Heart right ventricle (tissue), 16 donors: ENCODE measurements at regions of chr6 and their contacts with region 1.

Region 1: GRCh38 chr6:28940858-28941680 is 17.3 kb upstream of the TRIM27 start:
- DNase-seq: peak; percentile 42 to 87
- ATAC-seq: peak; percentile 72 to 95 (median 83)
- H3K4me3 ChIP-seq: peak overlapping the region; percentile 41 to 71 (median 61)
- H3K27ac ChIP-seq: peak overlapping the region in 9 of 10 donors; percentile 35 to 82 (median 67)
- H3K4me1 ChIP-seq: peaks cover 0 to 56% (median 26%) of the 10 kb centered on the region in 9 donors
- H3K27me3 ChIP-seq: no peaks in the 10 kb centered on the region
- CTCF ChIP-seq: no peak

Region 2: DNA sequence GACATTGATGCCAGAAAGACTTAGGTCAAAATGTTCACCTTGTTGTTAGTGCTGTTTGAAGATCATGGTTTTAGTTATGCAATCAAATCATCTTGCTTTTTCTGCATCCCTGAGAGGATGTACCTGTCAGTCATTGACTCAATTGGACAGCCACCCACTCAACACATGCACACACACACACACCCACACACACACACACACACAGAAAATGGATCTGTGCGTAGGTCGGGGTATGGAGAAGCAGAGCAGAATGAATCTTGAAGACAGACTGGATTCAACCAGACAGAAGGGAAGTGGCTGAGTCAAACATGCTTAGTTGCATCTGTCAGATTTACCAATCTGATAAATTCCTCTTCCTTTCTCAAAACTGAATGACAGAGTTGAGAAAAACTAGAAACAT is 478.7 kb before region 1 on chr6:
- intact Hi-C with region 1: no loop called
- DNase-seq: no peak
- ATAC-seq: no peak
- H3K4me3 ChIP-seq: no peak overlapping the region
- H3K27ac ChIP-seq: no peak overlapping the region
- H3K4me1 ChIP-seq: no peaks in the 10 kb centered on the region
- H3K27me3 ChIP-seq: peaks cover 0 to 94% (median 70%) of the 10 kb centered on the region in 7 donors
- CTCF ChIP-seq: no peak

Region 3: DNA sequence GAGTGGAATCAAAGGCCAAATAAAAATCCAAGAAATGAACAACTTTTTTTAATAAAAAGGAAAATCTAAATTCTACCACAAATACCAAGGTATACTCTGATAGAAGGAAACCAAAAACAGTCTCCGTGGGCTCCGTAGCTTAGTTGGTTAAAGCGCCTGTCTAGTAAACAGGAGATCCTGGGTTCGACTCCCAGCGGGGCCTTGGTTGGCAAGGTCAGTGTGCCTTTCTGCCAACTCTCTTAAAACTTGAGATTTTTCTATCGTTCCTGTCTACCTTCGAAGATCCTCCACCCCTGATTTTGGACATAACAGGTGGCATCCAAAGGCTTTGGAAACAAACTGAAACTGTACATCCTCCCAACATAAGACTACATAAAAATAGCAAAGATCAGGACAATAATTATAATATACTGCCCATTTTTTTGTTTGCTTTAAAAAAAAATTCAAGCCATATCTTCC is 215.2 kb before region 1 on chr6:
- intact Hi-C with region 1: no loop called
- DNase-seq: no peak
- ATAC-seq: no peak
- H3K4me3 ChIP-seq: no peak overlapping the region
- H3K27ac ChIP-seq: no peak overlapping the region
- H3K4me1 ChIP-seq: peaks cover 0 to 14% (median 0%) of the 10 kb centered on the region in 9 donors
- H3K27me3 ChIP-seq: peaks cover 0 to 96% (median 76%) of the 10 kb centered on the region in 7 donors
- CTCF ChIP-seq: no peak

Region 4: GRCh38 chr6:28856620-28857005 is 84.5 kb before region 1 on chr6:
- intact Hi-C with region 1: loop called in 1 of 10 experiments (anchors 10 kb)
- DNase-seq: no peak
- ATAC-seq: no peak
- H3K4me3 ChIP-seq: no peak overlapping the region
- H3K27ac ChIP-seq: no peak overlapping the region
- H3K4me1 ChIP-seq: no peaks in the 10 kb centered on the region
- H3K27me3 ChIP-seq: peaks cover 0 to 23% (median 4%) of the 10 kb centered on the region in 7 donors
- CTCF ChIP-seq: no peak

Region 5: GRCh38 chr6:28880894-28881780 is 59.9 kb before region 1 on chr6:
- intact Hi-C with region 1: loop called in 1 of 10 experiments (anchors 5 kb)
- DNase-seq: peak; percentile 53 to 68
- ATAC-seq: peak; percentile 53 to 87 (median 80)
- H3K4me3 ChIP-seq: peak overlapping the region; percentile 7 to 68 (median 58)
- H3K27ac ChIP-seq: peak overlapping the region in 1 of 10 donors; percentile 30
- H3K4me1 ChIP-seq: peaks cover 0 to 15% (median 0%) of the 10 kb centered on the region in 9 donors
- H3K27me3 ChIP-seq: peaks cover 0 to 39% (median 29%) of the 10 kb centered on the region in 7 donors
- CTCF ChIP-seq: no peak

Region 6: GRCh38 chr6:28895134-28895812 is 45.8 kb before region 1 on chr6:
- intact Hi-C with region 1: loop called in 8 of 10 experiments (anchors 1 to 10 kb)
- DNase-seq: peak; percentile 85 to 95
- ATAC-seq: peak; percentile 88 to 93 (median 91)
- H3K4me3 ChIP-seq: peak overlapping the region; percentile 50 to 78 (median 70)
- H3K27ac ChIP-seq: peak overlapping the region; percentile 91 to 99 (median 97)
- H3K4me1 ChIP-seq: peaks cover 0 to 20% (median 10%) of the 10 kb centered on the region in 9 donors
- H3K27me3 ChIP-seq: no peaks in the 10 kb centered on the region
- CTCF ChIP-seq: no peak

Region 7: GRCh38 chr6:28923318-28924102 is 17.6 kb before region 1 on chr6 and contains the start of gene TRIM27:
- intact Hi-C with region 1: loop called in 4 of 10 experiments (anchors 1 to 2 kb)
- DNase-seq: peak; percentile 92 to 94
- ATAC-seq: peak; percentile 96 to 99 (median 98)
- H3K4me3 ChIP-seq: peak within 1 kb of the TSS; percentile 80 to 100 (median 92)
- H3K27ac ChIP-seq: peak within 1 kb of the TSS; percentile 93 to 99 (median 98)
- H3K4me1 ChIP-seq: peaks cover 0 to 50% (median 17%) of the 10 kb centered on the region in 9 donors
- H3K27me3 ChIP-seq: no peaks in the 10 kb centered on the region
- CTCF ChIP-seq: peak in 2 of 9 donors; percentile 9 to 26
- total RNA-seq, gene TRIM27: 14.7 to 23.1 (median 17.6) TPM

Region 8: DNA sequence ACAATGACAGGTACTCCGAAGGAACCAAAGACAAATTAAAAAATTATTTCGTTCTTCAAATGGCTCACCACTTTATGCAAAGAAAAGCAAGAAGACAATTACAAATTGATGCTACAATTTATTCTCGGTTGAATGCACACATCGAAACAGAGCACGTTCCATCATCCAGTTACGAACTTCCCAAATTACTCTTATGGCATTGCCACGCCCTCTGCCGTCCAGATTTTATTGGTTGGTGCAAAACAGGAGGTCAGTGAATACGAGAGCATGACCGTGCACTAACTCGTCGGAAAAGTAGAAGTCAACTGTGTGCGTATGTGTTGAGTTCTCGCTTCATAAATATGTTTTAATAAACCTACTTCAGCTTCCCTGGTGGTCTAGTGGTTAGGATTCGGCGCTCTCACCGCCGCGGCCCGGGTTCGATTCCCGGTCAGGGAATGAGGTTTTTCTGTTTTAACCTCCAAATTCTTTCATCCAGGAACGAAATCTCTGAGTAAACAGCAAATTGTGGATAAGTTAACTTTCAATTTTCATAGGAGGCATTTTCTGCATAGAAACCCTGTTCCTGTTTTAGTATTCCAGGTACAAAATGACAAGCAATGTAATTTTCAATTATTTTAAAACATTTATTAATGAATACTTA is 40.9 kb after region 1 on chr6:
- intact Hi-C with region 1: loop called in 8 of 10 experiments (anchors 1 to 5 kb)
- DNase-seq: peak; percentile 72 to 86
- ATAC-seq: peak; percentile 72 to 90 (median 86)
- H3K4me3 ChIP-seq: peak overlapping the region; percentile 42 to 71 (median 66)
- H3K27ac ChIP-seq: peak overlapping the region; percentile 21 to 76 (median 68)
- H3K4me1 ChIP-seq: peaks cover 0 to 47% (median 6%) of the 10 kb centered on the region in 9 donors
- H3K27me3 ChIP-seq: peaks cover 0 to 18% (median 14%) of the 10 kb centered on the region in 7 donors
- CTCF ChIP-seq: peak in 5 of 9 donors; percentile 15 to 40 (median 23)

Region 9: DNA sequence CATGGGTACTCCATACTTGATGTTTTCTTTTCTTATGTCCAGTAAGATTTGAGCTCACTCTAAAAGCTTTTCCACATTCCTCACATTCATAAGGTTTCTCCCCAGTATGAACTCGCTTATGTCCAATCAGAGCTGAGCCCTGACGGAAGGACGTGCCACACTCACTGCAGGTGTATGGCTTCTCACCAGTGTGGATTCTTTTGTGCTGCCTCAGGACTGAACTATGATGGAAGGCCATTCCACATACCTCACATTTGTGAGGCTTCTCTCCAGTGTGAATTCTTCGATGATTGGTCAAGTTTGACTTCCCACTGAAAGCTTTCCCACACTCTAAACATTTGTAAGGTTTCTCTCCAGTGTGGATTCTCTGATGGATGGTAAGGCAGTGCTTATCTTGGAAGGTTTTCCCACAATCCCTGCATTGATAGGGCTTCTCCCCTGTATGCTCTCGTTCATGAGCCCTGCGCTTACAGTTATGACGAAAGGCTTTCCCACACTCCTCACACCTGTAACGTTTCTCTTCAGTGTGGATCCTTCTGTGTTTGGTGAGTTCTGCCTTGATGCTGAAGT is 54.1 kb after region 1 on chr6:
- intact Hi-C with region 1: no loop called
- DNase-seq: no peak
- ATAC-seq: no peak
- H3K4me3 ChIP-seq: no peak overlapping the region
- H3K27ac ChIP-seq: no peak overlapping the region
- H3K4me1 ChIP-seq: no peaks in the 10 kb centered on the region
- H3K27me3 ChIP-seq: peaks cover 0 to 28% (median 4%) of the 10 kb centered on the region in 7 donors
- CTCF ChIP-seq: no peak

Region 10: DNA sequence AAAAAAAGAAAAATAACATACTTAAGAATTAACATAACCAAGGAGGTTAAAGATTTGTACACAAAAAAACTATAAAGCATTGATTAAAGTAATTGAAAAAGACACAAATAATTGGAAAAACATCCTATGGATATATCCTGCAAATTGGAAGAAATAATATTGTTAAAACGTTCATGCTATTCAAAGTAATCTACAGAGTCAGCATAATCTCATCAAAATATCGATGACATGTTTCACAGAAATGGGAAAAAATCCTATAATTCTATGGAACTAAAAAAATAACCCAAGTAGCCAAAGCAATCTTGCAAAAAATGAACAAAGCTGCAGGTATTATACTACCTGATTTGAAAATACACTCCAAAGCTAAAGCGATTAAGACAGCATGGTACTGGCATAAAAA is 404.3 kb after region 1 on chr6:
- intact Hi-C with region 1: no loop called
- DNase-seq: no peak
- ATAC-seq: no peak
- H3K4me3 ChIP-seq: no peak overlapping the region
- H3K27ac ChIP-seq: no peak overlapping the region
- H3K4me1 ChIP-seq: no peaks in the 10 kb centered on the region
- H3K27me3 ChIP-seq: no peaks in the 10 kb centered on the region
- CTCF ChIP-seq: no peak